ENCODE measurements at regions of chr5 and their contacts with region 1.

Region 1: DNA sequence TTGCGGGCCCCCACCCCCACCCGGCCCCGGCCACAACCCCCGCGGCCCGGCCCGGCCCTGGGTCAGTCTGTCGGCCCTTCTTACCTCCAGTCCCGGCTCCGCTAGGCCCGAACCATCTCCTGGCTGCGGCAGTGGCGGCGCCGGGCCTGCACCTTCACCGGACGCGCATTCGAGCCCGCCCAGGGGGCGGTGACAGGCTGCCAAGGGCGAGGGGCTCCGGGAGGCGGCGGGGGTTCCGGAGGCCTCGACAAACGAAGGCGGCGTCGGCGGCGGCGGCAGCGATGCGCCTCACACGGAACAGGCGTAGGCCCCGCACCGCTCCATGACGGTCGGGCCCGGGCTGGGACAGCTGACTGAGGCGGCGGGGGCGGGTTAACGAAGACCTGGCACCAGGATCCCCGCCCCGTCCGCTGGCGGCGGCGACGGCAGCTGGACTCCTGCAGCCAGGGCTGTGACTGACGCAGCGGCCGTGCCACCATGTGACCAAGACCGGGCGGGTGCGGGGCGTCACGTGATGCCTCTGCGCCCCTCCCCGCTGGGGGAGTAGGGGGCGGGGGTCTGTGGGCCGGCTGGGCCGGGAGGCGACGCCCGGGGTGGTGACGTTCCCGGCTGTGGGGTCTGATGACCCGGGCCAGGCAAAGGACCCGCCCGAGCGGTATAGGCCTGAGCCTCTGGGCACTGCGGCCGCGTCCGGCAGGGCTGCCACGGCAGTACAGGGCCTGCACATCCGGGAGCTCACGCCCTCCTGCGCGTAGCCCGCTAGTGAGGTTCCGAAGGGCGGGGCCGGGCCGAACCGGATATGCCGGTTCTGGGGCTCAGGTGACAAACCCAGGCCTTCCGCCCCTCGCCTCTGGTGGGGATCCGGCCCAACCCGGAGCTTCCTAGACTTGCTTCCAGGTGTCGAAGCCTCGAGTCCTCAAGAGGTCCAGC is at the start of gene AFF4:
- DNase-seq: peak; percentile 95 to 98 (median 97)
- H3K4me3 ChIP-seq: peak within 1 kb of the TSS; percentile 58 to 99 (median 88)
- H3K27ac ChIP-seq: peak within 1 kb of the TSS; percentile 94 to 98
- H3K4me1 ChIP-seq: peaks cover 10 to 24% (median 18%) of the 10 kb centered on the region in 4 experiments
- H3K27me3 ChIP-seq: no peaks in the 10 kb centered on the region

Region 2: GRCh38 chr5:133025804-133026663 is 62.6 kb after region 1 on chr5 and contains the start of gene ZCCHC10:
- CTCF ChIA-PET with region 1: interaction called, 3 read pairs
- POLR2A ChIA-PET with region 1: interaction called, 13 read pairs
- DNase-seq: peak; percentile 95 to 97 (median 97)
- H3K4me3 ChIP-seq: peak within 1 kb of the TSS; percentile 76 to 98 (median 94)
- H3K27ac ChIP-seq: peak within 1 kb of the TSS; percentile 94 to 97
- H3K4me1 ChIP-seq: peaks cover 8 to 17% (median 11%) of the 10 kb centered on the region in 4 experiments
- H3K27me3 ChIP-seq: no peaks in the 10 kb centered on the region

Region 3: DNA sequence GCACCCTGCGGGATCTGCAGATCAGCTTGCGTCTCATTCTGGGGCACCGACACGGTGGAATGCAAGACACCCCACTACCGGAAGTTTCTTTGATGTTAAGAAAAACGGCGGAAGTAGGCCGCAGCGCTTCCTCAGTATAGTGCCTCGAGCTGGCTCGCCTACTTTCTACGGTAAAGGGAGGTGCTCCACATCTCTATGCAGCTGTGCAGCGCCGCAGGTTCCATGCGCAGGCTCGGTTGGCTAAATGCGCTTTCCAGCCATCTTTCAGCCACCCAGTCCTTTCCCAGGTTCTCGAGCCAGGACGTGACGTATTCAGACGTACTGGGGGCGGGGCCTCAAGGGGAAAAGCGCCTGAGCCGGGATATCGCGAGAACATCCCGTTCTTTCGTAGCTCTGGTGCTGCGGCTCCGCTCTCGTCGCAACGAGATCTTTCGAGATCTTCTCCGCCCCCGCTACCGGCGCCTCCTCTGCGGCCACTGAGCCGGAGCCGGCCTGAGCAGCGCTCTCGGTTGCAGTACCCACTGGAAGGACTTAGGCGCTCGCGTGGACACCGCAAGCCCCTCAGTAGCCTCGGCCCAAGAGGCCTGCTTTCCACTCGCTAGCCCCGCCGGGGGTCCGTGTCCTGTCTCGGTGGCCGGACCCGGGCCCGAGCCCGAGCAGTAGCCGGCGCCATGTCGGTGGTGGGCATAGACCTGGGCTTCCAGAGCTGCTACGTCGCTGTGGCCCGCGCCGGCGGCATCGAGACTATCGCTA is 88.3 kb after region 1 on chr5 and contains the start of gene HSPA4:
- CTCF ChIA-PET with region 1: no interaction called
- POLR2A ChIA-PET with region 1: interaction called, 13 read pairs
- DNase-seq: peak; percentile 99 to 100 (median 99)
- H3K4me3 ChIP-seq: peak within 1 kb of the TSS; percentile 87 to 100 (median 94)
- H3K27ac ChIP-seq: peak within 1 kb of the TSS; percentile 98 to 99
- H3K4me1 ChIP-seq: peaks cover 10 to 31% (median 18%) of the 10 kb centered on the region in 4 experiments
- H3K27me3 ChIP-seq: no peaks in the 10 kb centered on the region

Region 4: GRCh38 chr5:133154274-133155074 is 191.0 kb after region 1 on chr5:
- CTCF ChIA-PET with region 1: no interaction called
- POLR2A ChIA-PET with region 1: no interaction called
- DNase-seq: no peak
- H3K4me3 ChIP-seq: no peak overlapping the region
- H3K27ac ChIP-seq: no peak overlapping the region
- H3K4me1 ChIP-seq: no peaks in the 10 kb centered on the region
- H3K27me3 ChIP-seq: peaks cover 0 to 2% (median 0%) of the 10 kb centered on the region in 5 experiments

Measured in common myeloid progenitor, CD34-positive (primary cell).